Activated CD4-positive, alpha-beta memory T cell treated with anti-CD3 and anti-CD28 coated beads, Interleukin-2, amount 10 ng/mL, durations not matched to agents 7 days and 5 days (primary cell): ENCODE measurements at regions of chr9 and their contacts with region 1.

Region 1: GRCh38 chr9:71768388-71769174 is at the start of gene CEMIP2:
- DNase-seq: peak; percentile 90
- H3K4me3 Mint-ChIP-seq: peak within 1 kb of the TSS; percentile 84
- H3K27ac Mint-ChIP-seq: peak within 1 kb of the TSS; percentile 83
- H3K4me1 Mint-ChIP-seq: peaks cover 33% of the 10 kb centered on the region
- H3K27me3 Mint-ChIP-seq: no peaks in the 10 kb centered on the region
- total RNA-seq, gene CEMIP2: 137 to 140 TPM

Region 2: DNA sequence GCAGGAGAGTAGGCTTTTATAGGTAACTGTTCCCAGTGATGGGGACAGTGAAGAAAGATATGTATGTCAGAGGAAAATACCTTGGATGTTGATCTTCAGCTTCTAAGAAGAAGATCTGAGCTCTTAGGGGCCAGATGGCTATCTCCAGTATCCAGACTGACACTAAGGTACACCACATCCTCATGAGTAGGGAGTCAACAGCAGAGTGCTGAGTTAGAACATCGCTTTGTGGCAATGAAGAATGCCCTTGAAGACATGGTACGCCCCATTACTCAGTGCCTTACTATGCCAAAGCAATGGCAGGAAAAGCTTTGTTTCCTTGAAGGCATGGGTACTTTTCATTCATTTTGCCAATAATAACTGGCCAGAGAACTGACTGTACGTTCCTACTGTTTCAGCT is 263.9 kb before region 1 on chr9:
- CTCF ChIA-PET with region 1: no interaction called
- POLR2A ChIA-PET with region 1: no interaction called
- DNase-seq: no peak
- H3K4me3 Mint-ChIP-seq: no peak overlapping the region
- H3K27ac Mint-ChIP-seq: no peak overlapping the region
- H3K4me1 Mint-ChIP-seq: no peaks in the 10 kb centered on the region
- H3K27me3 Mint-ChIP-seq: peaks cover 6% of the 10 kb centered on the region

Region 3: DNA sequence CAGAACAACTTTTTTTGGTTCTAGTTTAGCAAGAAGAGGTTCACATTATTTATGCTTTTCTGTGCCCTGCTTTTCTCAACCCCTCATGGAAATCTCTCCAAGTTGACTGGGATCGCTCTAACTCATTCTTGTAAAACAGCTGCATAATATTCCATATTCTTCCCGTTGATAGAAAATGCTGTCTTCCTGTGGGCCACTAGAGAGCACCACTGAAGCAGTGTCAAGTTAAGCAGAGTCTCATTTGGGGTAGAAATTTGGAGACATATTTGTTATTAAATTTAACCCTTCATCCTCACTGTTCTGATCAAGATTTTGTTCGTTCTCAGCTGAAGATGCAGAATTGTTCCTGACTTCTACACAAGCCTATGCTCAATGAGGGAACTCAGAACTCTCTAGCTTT is 140.3 kb before region 1 on chr9:
- CTCF ChIA-PET with region 1: interaction called, 16 read pairs
- POLR2A ChIA-PET with region 1: interaction called, 8 read pairs
- DNase-seq: no peak
- H3K4me3 Mint-ChIP-seq: no peak overlapping the region
- H3K27ac Mint-ChIP-seq: no peak overlapping the region
- H3K4me1 Mint-ChIP-seq: peaks cover 42% of the 10 kb centered on the region
- H3K27me3 Mint-ChIP-seq: peaks cover 10% of the 10 kb centered on the region

Region 4: DNA sequence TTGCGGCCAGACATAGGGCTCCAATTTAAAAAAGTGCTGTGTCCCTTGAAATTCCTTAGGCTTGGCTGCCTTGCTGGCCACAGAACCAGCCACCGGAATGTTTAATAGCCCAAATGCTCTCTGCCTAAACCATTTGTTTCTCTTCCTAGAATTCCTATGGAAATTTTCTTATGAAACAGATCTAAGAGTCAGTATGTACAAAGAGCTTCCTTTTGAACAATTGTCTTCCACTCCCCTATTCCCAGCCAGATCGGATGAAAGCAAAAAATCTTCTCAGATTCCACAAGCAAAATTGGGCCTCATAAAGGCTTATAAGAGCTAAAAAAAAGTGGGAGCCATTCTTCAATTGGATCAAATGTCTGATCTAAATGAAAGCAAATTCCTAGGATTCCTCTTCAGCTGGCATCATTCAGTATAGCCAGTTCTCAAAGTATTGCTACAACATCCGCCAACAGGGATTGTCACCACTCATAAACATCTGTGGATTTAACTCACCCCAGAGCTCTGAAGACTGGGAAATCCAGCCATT is 104.6 kb before region 1 on chr9:
- CTCF ChIA-PET with region 1: no interaction called
- POLR2A ChIA-PET with region 1: no interaction called
- DNase-seq: no peak
- H3K4me3 Mint-ChIP-seq: no peak overlapping the region
- H3K27ac Mint-ChIP-seq: no peak overlapping the region
- H3K4me1 Mint-ChIP-seq: peaks cover 19% of the 10 kb centered on the region
- H3K27me3 Mint-ChIP-seq: peaks cover 11% of the 10 kb centered on the region

Region 5: GRCh38 chr9:71716138-71716909 is 52.3 kb before region 1 on chr9:
- CTCF ChIA-PET with region 1: interaction called, 13 read pairs
- POLR2A ChIA-PET with region 1: interaction called, 3 read pairs
- DNase-seq: no peak
- H3K4me3 Mint-ChIP-seq: no peak overlapping the region
- H3K27ac Mint-ChIP-seq: no peak overlapping the region
- H3K4me1 Mint-ChIP-seq: peaks cover 3% of the 10 kb centered on the region
- H3K27me3 Mint-ChIP-seq: no peaks in the 10 kb centered on the region

Region 6: GRCh38 chr9:71795097-71795813 is 26.7 kb after region 1 on chr9:
- CTCF ChIA-PET with region 1: interaction called, 4 read pairs
- POLR2A ChIA-PET with region 1: interaction called, 52 read pairs
- DNase-seq: no peak
- H3K4me3 Mint-ChIP-seq: peak overlapping the region; percentile 56
- H3K27ac Mint-ChIP-seq: peak overlapping the region; percentile 98
- H3K4me1 Mint-ChIP-seq: peaks cover 46% of the 10 kb centered on the region
- H3K27me3 Mint-ChIP-seq: no peaks in the 10 kb centered on the region

Region 7: GRCh38 chr9:71830929-71831328 is 62.3 kb after region 1 on chr9:
- CTCF ChIA-PET with region 1: no interaction called
- POLR2A ChIA-PET with region 1: no interaction called
- DNase-seq: no peak
- H3K4me3 Mint-ChIP-seq: no peak overlapping the region
- H3K27ac Mint-ChIP-seq: no peak overlapping the region
- H3K4me1 Mint-ChIP-seq: no peaks in the 10 kb centered on the region
- H3K27me3 Mint-ChIP-seq: peaks cover 20% of the 10 kb centered on the region

Region 8: DNA sequence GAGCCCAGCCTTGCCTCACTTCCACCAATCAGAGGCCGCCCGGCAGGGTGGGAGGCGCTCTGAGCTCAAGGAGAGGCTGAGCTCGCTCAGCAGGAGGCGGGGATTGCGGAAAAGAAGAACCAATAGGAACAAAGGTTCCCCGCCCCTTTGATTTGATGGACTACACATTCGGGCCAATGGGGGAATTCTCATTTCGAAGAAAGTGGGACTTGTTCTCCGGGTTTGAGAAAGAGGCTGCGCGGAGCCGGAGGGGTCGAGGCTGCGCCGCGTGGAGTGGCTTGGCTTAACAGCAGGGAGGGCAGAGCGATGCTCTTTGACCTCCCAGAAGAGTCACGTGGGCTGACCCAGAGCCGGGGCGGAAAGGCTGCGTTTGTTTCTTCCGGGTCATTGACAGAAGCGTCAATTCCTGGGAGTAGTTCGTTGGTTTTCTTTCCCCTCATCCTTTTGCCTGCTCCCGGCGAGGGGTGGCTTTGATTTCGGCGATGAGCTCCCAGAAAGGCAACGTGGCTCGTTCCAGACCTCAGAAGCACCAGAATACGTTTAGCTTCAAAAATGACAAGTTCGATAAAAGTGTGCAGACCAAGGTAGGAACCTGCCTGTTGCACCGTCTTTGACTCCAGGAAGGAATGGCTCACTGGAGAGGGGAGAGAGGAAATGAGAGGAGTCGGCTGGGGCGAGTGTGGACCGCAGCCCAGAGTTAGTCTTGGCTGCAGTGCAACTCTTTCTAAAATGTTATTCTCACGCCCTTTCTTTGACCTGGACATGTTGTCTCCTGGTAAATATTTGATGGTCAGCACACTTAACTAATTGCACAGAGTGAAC is 142.9 kb after region 1 on chr9 and contains the start of gene C9orf85:
- CTCF ChIA-PET with region 1: interaction called, 5 read pairs
- POLR2A ChIA-PET with region 1: interaction called, 13 read pairs
- DNase-seq: peak; percentile 98
- H3K4me3 Mint-ChIP-seq: peak within 1 kb of the TSS; percentile 97
- H3K27ac Mint-ChIP-seq: peak within 1 kb of the TSS; percentile 94
- H3K4me1 Mint-ChIP-seq: peaks cover 59% of the 10 kb centered on the region
- H3K27me3 Mint-ChIP-seq: no peaks in the 10 kb centered on the region
- total RNA-seq, gene C9orf85: 10.8 to 12.1 TPM